ENCODE measurements at regions of chr12 and their contacts with region 1.

Region 1: DNA sequence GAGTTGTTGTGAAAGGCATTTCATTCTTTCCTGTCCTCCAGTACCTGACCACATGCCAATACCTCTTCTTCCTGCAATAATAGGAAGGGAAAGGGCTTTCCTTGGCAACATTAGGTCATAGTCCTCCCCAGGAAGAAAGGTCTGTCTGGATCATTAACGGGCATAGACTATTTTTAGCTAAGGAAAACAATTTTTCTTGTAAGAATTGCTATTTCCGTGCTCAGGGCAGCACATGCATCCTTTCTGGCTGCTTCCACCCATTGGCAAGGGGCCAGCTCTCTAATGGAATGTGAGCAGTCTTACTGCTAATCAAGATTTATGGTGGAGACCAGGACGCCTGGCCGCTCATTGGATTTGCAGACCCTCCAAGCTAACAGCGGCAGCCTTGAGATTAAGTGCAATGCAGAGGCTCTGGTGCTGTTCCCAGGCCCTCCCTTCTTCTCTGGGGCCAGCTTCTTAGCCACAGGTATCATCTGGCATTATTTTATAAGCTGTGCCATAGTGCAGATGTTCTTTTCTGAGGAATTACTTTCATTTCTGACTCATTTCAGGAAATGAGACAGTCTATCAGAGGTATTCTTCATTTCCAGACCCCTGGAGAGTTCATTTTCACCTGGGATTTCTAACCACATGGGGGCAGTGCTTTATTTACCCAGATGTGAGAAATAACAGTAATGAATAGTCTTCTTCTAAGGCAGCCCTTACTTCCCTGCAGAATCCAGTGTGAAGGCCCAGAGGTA is 52.9 kb downstream of the ANO6 start:
- DNase-seq: peak; percentile 53 to 96
- H3K4me3 ChIP-seq: peak overlapping the region; percentile 22 to 39
- H3K27ac ChIP-seq: peak overlapping the region; percentile 75 to 87
- H3K4me1 ChIP-seq: peaks cover 8 to 56% of the 10 kb centered on the region in 2 donors
- H3K27me3 ChIP-seq: no peaks in the 10 kb centered on the region
- CTCF ChIP-seq: peak; percentile 25 to 56 (median 32)

Region 2: GRCh38 chr12:45234139-45234846 is 34.5 kb before region 1 on chr12:
- intact Hi-C with region 1: loop called (anchors 1 kb)
- DNase-seq: peak in 1 of 2 donors; percentile 81
- H3K4me3 ChIP-seq: peak overlapping the region; percentile 28 to 30
- H3K27ac ChIP-seq: peak overlapping the region; percentile 85 to 91
- H3K4me1 ChIP-seq: peaks cover 14 to 59% of the 10 kb centered on the region in 2 donors
- H3K27me3 ChIP-seq: no peaks in the 10 kb centered on the region
- CTCF ChIP-seq: no peak

Region 3: DNA sequence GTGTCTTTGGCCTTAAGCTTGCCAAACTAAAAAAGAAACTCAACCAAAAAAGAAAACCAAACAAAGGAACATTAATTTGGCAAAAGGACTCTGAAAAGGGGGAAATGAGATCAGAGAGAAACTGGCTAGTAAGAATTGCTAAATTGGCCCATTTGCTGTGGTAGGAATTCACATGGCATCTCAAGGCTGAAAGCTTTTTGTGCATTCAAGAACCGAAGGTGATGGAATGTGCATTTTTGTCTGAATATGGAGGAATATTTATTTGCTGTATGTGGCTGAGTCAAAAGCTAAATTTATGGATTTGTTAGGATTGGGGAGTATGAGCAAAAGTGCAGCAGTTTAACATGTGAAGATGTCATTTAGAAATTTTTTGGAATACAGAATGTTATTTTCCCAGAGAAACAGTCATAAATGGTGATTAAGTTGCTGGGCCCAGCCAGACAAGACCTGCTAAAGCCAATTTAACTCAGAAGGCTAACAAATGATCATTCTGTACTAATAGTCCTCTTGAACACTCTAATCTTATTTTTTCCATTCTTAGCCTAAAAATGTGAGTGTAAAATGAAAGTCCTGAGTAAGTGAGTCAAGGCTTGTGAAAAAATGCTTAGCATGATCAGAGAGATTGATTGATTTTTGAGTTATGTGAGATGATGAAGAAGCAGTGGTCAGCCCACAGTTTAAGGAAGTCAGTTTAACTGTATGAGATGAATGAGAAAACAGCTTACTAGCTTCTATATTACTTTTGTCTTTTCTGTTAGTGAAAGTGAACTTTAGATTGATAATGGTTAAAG is 41.2 kb after region 1 on chr12:
- intact Hi-C with region 1: loop called (anchors 2 kb)
- DNase-seq: no peak
- H3K4me3 ChIP-seq: no peak overlapping the region
- H3K27ac ChIP-seq: peak overlapping the region; percentile 73 to 86
- H3K4me1 ChIP-seq: peaks cover 14 to 69% of the 10 kb centered on the region in 2 donors
- H3K27me3 ChIP-seq: no peaks in the 10 kb centered on the region
- CTCF ChIP-seq: peak in 2 of 3 experiments; percentile 6 to 27

Region 4: GRCh38 chr12:45336331-45337064 is 67.7 kb after region 1 on chr12:
- intact Hi-C with region 1: no loop called
- DNase-seq: no peak
- H3K4me3 ChIP-seq: no peak overlapping the region
- H3K27ac ChIP-seq: no peak overlapping the region
- H3K4me1 ChIP-seq: peaks cover 0 to 9% of the 10 kb centered on the region in 2 donors
- H3K27me3 ChIP-seq: no peaks in the 10 kb centered on the region
- CTCF ChIP-seq: no peak

Region 5: DNA sequence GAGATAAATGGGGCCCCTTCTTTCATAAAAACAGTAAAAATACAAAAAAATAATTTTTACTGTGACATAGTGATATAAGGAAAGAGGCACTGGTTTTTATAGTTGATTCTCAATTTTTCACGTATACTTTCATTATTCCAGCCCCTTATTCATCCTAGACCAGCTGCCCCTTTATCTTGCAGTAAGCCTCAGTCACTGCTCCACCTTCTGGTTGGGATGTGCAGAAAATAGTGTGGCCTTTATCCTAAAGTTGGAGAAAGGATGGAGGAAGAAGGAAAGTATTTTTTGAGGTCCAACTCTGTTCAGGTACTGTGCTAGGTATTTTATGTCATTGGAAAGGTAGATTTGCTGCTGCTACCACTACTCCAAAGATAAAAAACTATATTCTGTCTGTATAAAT is 119.7 kb after region 1 on chr12:
- intact Hi-C with region 1: loop called (anchors 5 kb)
- DNase-seq: no peak
- H3K4me3 ChIP-seq: no peak overlapping the region
- H3K27ac ChIP-seq: peak overlapping the region in 1 of 2 donors; percentile 4
- H3K4me1 ChIP-seq: no peaks in the 10 kb centered on the region
- H3K27me3 ChIP-seq: no peaks in the 10 kb centered on the region
- CTCF ChIP-seq: peak; percentile 44 to 64 (median 52)

Region 6: GRCh38 chr12:45483571-45483970 is 214.7 kb after region 1 on chr12:
- intact Hi-C with region 1: no loop called
- DNase-seq: peak in 1 of 2 donors; percentile 80
- H3K4me3 ChIP-seq: no peak overlapping the region
- H3K27ac ChIP-seq: peak overlapping the region in 1 of 2 donors; percentile 34
- H3K4me1 ChIP-seq: peaks cover 0 to 10% of the 10 kb centered on the region in 2 donors
- H3K27me3 ChIP-seq: no peaks in the 10 kb centered on the region
- CTCF ChIP-seq: no peak